CD8-positive, alpha-beta T cell (primary cell): ENCODE measurements at regions of chr12 and their contacts with region 1.

Region 1: DNA sequence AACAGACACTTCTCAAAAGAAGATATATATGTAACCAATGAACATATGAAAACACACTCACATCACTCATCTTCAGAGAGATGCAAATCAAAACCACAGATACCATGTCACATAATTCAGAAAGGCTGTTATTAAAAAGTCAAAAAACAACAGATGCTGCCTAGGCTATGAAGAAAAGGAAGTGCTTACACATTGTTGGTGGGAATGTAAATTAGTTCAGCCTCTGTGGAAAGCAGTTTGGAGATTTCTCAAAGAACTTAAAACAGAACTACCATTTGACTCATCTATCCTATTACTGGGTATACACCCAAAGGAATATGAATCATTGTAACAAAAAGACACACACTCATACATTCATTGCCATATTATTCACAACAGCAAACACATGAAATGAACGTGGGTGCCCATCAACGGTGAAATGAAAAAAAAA is 35.1 kb downstream of the EIF2S3B start:
- DNase-seq: peak in 1 of 9 experiments; percentile 51
- ATAC-seq: peak; percentile 85
- H3K4me3 ChIP-seq: no peak overlapping the region
- H3K4me3 Mint-ChIP-seq: no peak overlapping the region
- H3K27ac ChIP-seq: no peak overlapping the region
- H3K27ac Mint-ChIP-seq: peak overlapping the region; percentile 79
- H3K4me1 ChIP-seq: peaks cover 9% of the 10 kb centered on the region
- H3K4me1 Mint-ChIP-seq: peaks cover 53% of the 10 kb centered on the region
- H3K27me3 ChIP-seq: no peaks in the 10 kb centered on the region
- H3K27me3 Mint-ChIP-seq: no peaks in the 10 kb centered on the region
- CTCF ChIP-seq: no peak

Region 2: DNA sequence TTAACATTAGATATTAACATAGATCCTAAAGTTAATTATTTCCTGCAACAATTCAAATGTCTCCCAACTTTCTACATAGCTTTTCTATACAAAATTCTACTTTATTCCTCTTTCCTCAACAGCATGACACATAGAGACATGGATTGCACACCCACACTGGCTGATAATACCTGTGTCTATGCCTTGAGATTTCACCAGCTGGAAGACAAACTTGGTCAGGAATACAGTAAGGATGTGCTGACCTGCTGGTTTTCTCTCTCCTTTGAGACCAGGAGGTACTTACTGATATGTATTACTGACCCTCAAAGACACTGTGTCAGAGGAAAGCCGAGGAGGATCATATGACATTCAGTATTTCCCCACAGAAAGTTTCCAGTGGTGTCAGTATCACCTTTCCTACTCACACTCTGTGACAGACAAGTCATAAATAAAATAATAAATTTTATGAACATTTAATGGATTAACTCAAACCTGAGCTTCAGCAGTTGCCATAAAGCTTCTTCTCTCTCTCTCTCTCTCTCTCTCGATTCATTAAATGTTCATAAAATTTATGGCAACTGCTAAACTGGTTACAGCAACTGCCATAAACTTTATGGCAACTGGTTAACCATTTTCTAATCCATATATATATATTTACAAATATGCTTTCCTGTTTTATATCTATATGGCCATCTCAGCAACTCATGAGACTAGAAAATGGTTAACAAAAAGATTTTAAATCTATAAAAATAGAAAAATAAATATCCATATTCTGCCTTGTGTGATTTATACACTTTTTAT is 12.4 kb before region 1 on chr12:
- CTCF ChIA-PET with region 1: no interaction called
- POLR2A ChIA-PET with region 1: no interaction called
- intact Hi-C with region 1: loop called in 1 of 2 experiments (anchors 2 kb)
- DNase-seq: no peak
- ATAC-seq: no peak
- H3K4me3 ChIP-seq: no peak overlapping the region
- H3K4me3 Mint-ChIP-seq: no peak overlapping the region
- H3K27ac ChIP-seq: no peak overlapping the region
- H3K27ac Mint-ChIP-seq: no peak overlapping the region
- H3K4me1 ChIP-seq: peaks cover 6% of the 10 kb centered on the region
- H3K4me1 Mint-ChIP-seq: peaks cover 12% of the 10 kb centered on the region
- H3K27me3 ChIP-seq: no peaks in the 10 kb centered on the region
- H3K27me3 Mint-ChIP-seq: no peaks in the 10 kb centered on the region
- CTCF ChIP-seq: no peak

Region 3: GRCh38 chr12:10554228-10554755 is 13.5 kb after region 1 on chr12:
- CTCF ChIA-PET with region 1: interaction called, 4 read pairs
- POLR2A ChIA-PET with region 1: interaction called, 9 read pairs
- intact Hi-C with region 1: loop called in 1 of 2 experiments (anchors 2 kb)
- DNase-seq: peak in 8 of 9 experiments; percentile 29 to 85 (median 70)
- ATAC-seq: peak; percentile 64
- H3K4me3 ChIP-seq: peak overlapping the region; percentile 61 to 64
- H3K4me3 Mint-ChIP-seq: peak overlapping the region; percentile 90
- H3K27ac ChIP-seq: peak overlapping the region; percentile 80 to 95
- H3K27ac Mint-ChIP-seq: peak overlapping the region; percentile 100
- H3K4me1 ChIP-seq: peaks cover 32% of the 10 kb centered on the region
- H3K4me1 Mint-ChIP-seq: peaks cover 61% of the 10 kb centered on the region
- H3K27me3 ChIP-seq: no peaks in the 10 kb centered on the region
- H3K27me3 Mint-ChIP-seq: no peaks in the 10 kb centered on the region
- CTCF ChIP-seq: no peak

Region 4: DNA sequence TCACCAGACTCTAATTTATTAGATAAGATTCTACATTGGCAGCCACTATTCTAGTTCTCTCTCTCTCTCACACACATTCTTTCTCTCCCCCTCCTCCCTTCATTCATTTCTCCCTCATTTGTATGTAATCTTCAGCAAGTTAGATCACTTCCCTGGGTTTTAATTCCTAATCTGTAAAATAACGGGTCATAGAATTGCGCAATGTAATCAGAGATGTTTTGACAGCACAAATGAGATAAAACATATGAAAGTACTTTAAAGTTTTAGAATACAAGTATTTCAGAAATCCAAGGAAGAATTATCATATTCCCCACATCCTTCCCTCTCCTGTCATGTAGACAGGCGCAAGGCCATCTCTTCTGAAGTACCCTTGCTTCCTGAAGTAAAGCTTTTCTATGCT is 111.4 kb after region 1 on chr12:
- CTCF ChIA-PET with region 1: no interaction called
- POLR2A ChIA-PET with region 1: no interaction called
- intact Hi-C with region 1: no loop called
- DNase-seq: no peak
- ATAC-seq: no peak
- H3K4me3 ChIP-seq: no peak overlapping the region
- H3K4me3 Mint-ChIP-seq: no peak overlapping the region
- H3K27ac ChIP-seq: no peak overlapping the region
- H3K27ac Mint-ChIP-seq: no peak overlapping the region
- H3K4me1 ChIP-seq: no peaks in the 10 kb centered on the region
- H3K4me1 Mint-ChIP-seq: no peaks in the 10 kb centered on the region
- H3K27me3 ChIP-seq: no peaks in the 10 kb centered on the region
- H3K27me3 Mint-ChIP-seq: no peaks in the 10 kb centered on the region
- CTCF ChIP-seq: no peak

Region 5: GRCh38 chr12:10928746-10929286 is 388.0 kb after region 1 on chr12 and contains the start of gene PRH2:
- CTCF ChIA-PET with region 1: no interaction called
- POLR2A ChIA-PET with region 1: no interaction called
- intact Hi-C with region 1: no loop called
- DNase-seq: no peak
- ATAC-seq: no peak
- H3K4me3 ChIP-seq: no peak within 1 kb of the TSS
- H3K4me3 Mint-ChIP-seq: no peak within 1 kb of the TSS
- H3K27ac ChIP-seq: no peak within 1 kb of the TSS
- H3K27ac Mint-ChIP-seq: no peak within 1 kb of the TSS
- H3K4me1 ChIP-seq: no peaks in the 10 kb centered on the region
- H3K4me1 Mint-ChIP-seq: no peaks in the 10 kb centered on the region
- H3K27me3 ChIP-seq: no peaks in the 10 kb centered on the region
- H3K27me3 Mint-ChIP-seq: no peaks in the 10 kb centered on the region
- CTCF ChIP-seq: no peak
- total RNA-seq, gene PRH2: not detected